GM10248 (cell line): ENCODE measurements at regions of chr1 and their contacts with region 1.

Region 1: GRCh38 chr1:94654031-94654430 is 112.5 kb upstream of the F3 start:
- DNase-seq: no peak
- CTCF ChIP-seq: no peak

Region 2: DNA sequence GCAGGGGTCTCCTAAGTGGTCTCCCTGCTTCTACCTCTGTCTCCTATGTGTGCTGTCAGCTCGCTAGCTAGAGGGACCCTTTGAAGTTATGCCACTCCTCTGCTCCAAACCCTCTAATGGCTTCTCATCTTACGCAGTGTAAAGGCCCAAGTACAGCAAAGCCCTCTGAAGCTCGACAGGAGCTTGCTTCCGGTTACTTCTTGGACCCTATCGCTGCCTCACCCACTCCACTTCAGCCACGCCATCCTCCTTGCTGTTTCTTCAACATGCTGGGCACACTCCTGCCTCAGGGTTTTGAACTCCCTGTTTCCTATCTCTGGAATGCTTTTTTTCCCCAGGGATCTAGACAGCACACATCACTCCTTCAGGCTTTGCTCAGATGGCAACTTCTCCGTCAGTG is 10.2 kb before region 1 on chr1:
- CTCF ChIA-PET with region 1: interaction called, 11 read pairs
- POLR2A ChIA-PET with region 1: no interaction called
- DNase-seq: no peak
- CTCF ChIP-seq: no peak

Region 3: GRCh38 chr1:94709891-94710581 is 56.0 kb after region 1 on chr1:
- CTCF ChIA-PET with region 1: no interaction called
- POLR2A ChIA-PET with region 1: no interaction called
- DNase-seq: no peak
- CTCF ChIP-seq: no peak